ENCODE measurements at regions of chr16 and their contacts with region 1.

Region 1: DNA sequence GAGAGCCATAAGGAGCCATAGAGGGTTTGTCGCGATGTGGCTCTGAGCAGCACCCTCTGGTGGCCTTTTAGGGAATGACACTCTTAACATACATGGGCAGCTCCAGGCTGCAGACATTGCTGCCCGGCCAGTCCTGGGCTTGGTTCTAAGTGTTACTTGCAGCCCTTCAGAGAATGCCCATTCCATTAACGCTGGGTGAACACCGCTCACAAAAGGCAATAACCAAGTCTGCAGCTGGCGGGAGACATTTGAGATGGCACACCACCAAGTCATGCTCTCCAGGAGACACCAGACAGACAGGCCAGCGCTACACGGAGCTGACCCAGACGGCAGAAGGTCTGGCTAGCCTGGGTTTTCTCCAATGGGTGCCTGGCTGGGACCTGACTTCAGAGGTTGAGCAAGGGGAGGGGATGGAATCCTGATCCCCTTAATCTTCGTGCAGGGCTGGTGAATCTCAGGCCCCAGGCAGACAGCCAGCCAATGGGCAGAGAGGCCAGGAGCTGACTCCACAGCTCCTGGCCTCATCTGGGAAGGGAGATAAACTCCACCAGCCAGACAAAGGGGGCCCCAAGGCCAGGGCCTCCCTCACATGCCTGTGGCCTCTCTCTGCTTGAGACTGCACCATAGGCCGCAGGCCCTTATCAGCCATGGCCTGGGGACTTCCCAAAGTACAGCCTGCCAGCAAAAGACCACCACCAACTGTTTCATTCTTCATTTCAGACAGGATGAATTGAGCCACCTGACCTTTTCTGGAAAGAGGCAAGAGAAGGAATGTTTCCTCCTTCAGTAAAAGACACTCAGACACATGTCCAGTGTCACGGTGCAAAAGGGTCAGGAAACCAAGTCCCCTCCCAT is 58.8 kb downstream of the ZDHHC7 start:
- DNase-seq: peak; percentile 83
- H3K4me3 Mint-ChIP-seq: no peak overlapping the region
- H3K27ac Mint-ChIP-seq: no peak overlapping the region
- H3K4me1 Mint-ChIP-seq: no peaks in the 10 kb centered on the region
- H3K27me3 Mint-ChIP-seq: no peaks in the 10 kb centered on the region

Region 2: GRCh38 chr16:84780544-84781376 is 171.8 kb before region 1 on chr16:
- CTCF ChIA-PET with region 1: no interaction called
- intact Hi-C with region 1: no loop called
- DNase-seq: no peak
- H3K4me3 Mint-ChIP-seq: no peak overlapping the region
- H3K27ac Mint-ChIP-seq: no peak overlapping the region
- H3K4me1 Mint-ChIP-seq: no peaks in the 10 kb centered on the region
- H3K27me3 Mint-ChIP-seq: no peaks in the 10 kb centered on the region

Region 3: GRCh38 chr16:84925092-84925772 is 27.3 kb before region 1 on chr16:
- CTCF ChIA-PET with region 1: interaction called, 34 read pairs
- intact Hi-C with region 1: loop called (anchors 1 kb)
- DNase-seq: peak; percentile 77
- H3K4me3 Mint-ChIP-seq: no peak overlapping the region
- H3K27ac Mint-ChIP-seq: no peak overlapping the region
- H3K4me1 Mint-ChIP-seq: no peaks in the 10 kb centered on the region
- H3K27me3 Mint-ChIP-seq: no peaks in the 10 kb centered on the region

Region 4: DNA sequence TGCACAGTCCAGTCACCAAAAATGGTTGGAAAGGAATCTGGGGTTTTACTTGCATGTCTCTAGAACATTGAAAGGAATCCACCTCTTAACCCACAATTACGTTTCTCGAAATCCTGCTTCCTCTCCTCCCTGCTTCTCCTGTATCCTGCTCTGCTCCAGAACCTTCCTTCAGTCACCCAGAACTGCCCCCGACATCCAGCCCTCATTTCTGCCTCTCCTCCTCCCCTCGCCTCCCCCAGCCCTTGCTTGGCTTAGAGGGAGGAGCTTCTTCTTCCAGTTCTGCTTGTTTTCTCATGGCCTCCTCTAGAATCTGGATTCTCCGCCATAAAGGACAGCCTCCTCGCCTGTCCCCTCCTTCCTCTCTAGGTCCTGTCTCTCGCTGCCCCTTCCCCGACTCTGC is 10.5 kb after region 1 on chr16:
- CTCF ChIA-PET with region 1: interaction called, 82 read pairs
- intact Hi-C with region 1: no loop called
- DNase-seq: no peak
- H3K4me3 Mint-ChIP-seq: no peak overlapping the region
- H3K27ac Mint-ChIP-seq: no peak overlapping the region
- H3K4me1 Mint-ChIP-seq: no peaks in the 10 kb centered on the region
- H3K27me3 Mint-ChIP-seq: no peaks in the 10 kb centered on the region